ENCODE measurements at regions of chr17 and their contacts with region 1.

Region 1: DNA sequence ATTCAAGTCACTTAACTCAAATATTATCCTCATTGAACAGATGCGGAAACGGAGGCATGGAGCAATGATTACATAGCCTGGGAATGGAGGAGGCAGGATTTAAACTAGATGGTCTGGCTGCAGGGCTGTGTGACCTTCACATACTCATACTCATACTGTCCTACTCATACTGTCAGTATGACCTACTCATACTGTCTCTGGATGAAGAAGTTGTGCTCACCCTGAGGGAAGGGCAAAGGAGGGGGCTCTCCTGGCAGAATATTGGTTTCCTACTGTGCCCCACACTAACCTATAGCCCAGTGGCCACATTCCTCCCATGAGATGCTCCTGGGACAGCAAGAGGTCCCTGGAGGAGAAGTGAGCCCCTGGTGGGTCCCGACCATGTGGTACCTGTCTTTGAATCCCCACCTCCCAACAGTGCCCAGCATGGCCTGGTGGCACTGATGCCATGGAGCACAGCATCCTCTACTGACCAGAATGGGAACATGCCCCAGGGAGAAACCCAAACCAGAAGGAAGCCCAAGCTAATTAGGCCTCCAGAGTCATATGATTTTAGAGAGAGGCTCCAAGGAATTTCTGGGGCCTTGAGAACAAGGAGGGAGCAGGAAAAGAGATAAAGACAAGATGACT is 197.3 kb upstream of the SDK2 start:
- DNase-seq: peak; percentile 65
- H3K4me3 ChIP-seq: no peak overlapping the region
- H3K27ac ChIP-seq: no peak overlapping the region
- H3K4me1 ChIP-seq: peaks cover 0 to 8% of the 10 kb centered on the region in 2 experiments; a peak in 1 of 4 replicates
- H3K27me3 ChIP-seq: no peaks in the 10 kb centered on the region
- CTCF ChIP-seq: no peak
- EP300 ChIP-seq: no peak
- RAD21 ChIP-seq: peak; percentile 86

Region 2: DNA sequence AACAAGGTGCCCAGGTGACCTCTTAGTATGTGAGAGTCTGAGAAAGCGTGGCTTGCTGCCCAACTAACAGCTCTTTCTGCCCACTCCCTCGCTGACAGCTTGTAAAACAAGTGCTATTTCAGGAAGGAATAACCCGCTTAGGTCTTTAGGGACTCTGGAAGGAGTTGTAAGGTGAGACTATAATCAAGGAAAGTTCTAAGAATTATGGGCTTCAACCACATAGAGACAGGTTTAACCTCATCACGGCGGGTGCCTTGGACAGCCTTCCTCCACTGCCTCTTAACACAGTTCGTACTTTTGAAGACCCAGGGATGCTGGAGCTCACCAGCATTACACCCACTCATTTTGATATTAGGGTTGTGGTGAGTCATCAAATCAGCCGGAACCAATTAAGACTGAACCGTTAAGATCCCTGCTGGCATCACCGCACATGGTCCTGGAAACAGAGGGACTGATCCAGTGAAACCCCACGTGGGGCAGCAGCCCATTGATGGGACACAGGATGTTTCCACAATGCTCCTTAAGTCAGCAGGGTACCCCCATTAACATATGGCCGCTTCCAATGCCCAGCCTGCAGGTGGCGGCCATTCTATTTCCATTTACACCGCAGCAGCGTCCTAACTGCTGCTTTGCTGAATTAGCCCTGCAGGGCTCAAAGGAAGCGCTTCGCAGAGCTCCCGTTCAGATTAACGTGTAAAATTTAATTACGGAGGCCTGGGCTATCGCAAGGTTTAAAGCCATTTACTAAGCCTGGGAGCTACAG is 20.7 kb before region 1 on chr17:
- CTCF ChIA-PET with region 1: interaction called, 12 read pairs
- POLR2A ChIA-PET with region 1: interaction called, 3 read pairs
- DNase-seq: peak; percentile 85
- H3K4me3 ChIP-seq: no peak overlapping the region
- H3K27ac ChIP-seq: peak overlapping the region in 1 of 2 experiments; percentile 77; a peak in 2 of 4 replicates
- H3K4me1 ChIP-seq: peaks cover 0 to 34% of the 10 kb centered on the region in 2 experiments; a peak in 2 of 4 replicates
- H3K27me3 ChIP-seq: no peaks in the 10 kb centered on the region
- CTCF ChIP-seq: no peak
- EP300 ChIP-seq: peak in 1 of 2 experiments; percentile 89; a peak in 2 of 4 replicates
- RAD21 ChIP-seq: peak; percentile 65

Region 3: DNA sequence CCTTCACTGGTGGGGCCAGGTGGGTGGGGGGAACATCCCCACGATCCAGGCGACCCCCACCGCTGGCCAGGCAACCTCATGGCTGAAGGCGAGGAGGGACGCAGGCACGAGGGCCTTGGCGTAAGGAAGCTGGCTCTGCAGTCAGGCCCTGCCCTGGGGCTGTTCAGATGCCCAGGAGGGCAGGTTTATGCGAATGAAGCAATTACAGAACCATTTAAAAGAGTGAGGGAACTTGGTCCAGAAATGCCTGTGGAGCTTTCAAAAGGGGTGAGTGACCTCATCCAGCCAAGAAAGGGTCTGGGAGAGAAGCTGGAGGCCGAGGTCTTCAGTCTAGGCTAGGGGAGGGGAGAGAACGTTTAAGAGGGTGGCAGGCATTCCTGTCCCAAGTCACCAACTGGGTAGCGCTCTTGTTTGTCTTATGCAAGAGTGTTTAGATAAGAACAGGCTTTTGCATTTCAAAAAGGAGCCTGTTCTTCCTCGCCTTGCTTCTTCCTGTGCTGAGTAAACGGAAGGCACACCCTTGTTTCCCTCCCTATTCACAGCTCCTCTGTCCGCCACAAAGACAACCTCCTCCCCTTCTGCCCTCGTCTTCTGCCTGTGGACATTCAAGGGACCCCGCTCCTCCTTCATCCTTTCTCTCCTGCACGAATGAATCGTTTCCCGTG is 13.8 kb before region 1 on chr17:
- CTCF ChIA-PET with region 1: interaction called, 22 read pairs
- POLR2A ChIA-PET with region 1: no interaction called
- DNase-seq: no peak
- H3K4me3 ChIP-seq: no peak overlapping the region
- H3K27ac ChIP-seq: no peak overlapping the region
- H3K4me1 ChIP-seq: peaks cover 0 to 22% of the 10 kb centered on the region in 2 experiments; a peak in 1 of 4 replicates
- H3K27me3 ChIP-seq: no peaks in the 10 kb centered on the region
- CTCF ChIP-seq: no peak
- EP300 ChIP-seq: no peak
- RAD21 ChIP-seq: no peak

Region 4: GRCh38 chr17:73855720-73856333 is 14.3 kb after region 1 on chr17:
- CTCF ChIA-PET with region 1: interaction called, 11 read pairs
- POLR2A ChIA-PET with region 1: no interaction called
- DNase-seq: no peak
- H3K4me3 ChIP-seq: no peak overlapping the region
- H3K27ac ChIP-seq: no peak overlapping the region
- H3K4me1 ChIP-seq: peaks cover 0 to 12% of the 10 kb centered on the region in 2 experiments; a peak in 1 of 4 replicates
- H3K27me3 ChIP-seq: no peaks in the 10 kb centered on the region
- CTCF ChIP-seq: no peak
- EP300 ChIP-seq: no peak
- RAD21 ChIP-seq: no peak

Measured in SK-N-SH (cell line).